Naive thymus-derived CD4-positive, alpha-beta T cell (primary cell): ENCODE measurements at regions of chrX and their contacts with region 1.

Region 1: GRCh38 chrX:11758400-11759171 is 549 bp downstream of the MSL3 start:
- DNase-seq: peak; percentile 86 to 91 (median 89)
- ATAC-seq: peak; percentile 86
- H3K4me3 ChIP-seq: peak overlapping the region; percentile 95
- H3K4me3 Mint-ChIP-seq: peak overlapping the region; percentile 88 to 100 (median 97)
- H3K27ac ChIP-seq: peak overlapping the region; percentile 93
- H3K27ac Mint-ChIP-seq: peak overlapping the region; percentile 95 to 100 (median 99)
- H3K4me1 ChIP-seq: peaks cover 6 to 11% of the 10 kb centered on the region in 2 donors
- H3K4me1 Mint-ChIP-seq: peaks cover 1 to 48% (median 30%) of the 10 kb centered on the region in 7 donors
- H3K27me3 ChIP-seq: no peaks in the 10 kb centered on the region
- H3K27me3 Mint-ChIP-seq: peaks cover 0 to 24% (median 0%) of the 10 kb centered on the region in 5 donors

Region 2: GRCh38 chrX:10111364-10112148 is 1647.0 kb before region 1 on chrX:
- CTCF ChIA-PET with region 1: no interaction called
- POLR2A ChIA-PET with region 1: no interaction called
- intact Hi-C with region 1: loop called in 1 of 2 experiments (anchors 5 kb)
- DNase-seq: peak; percentile 12 to 81 (median 73)
- ATAC-seq: peak; percentile 84
- H3K4me3 ChIP-seq: peak overlapping the region; percentile 56
- H3K4me3 Mint-ChIP-seq: peak overlapping the region; percentile 65 to 90 (median 85)
- H3K27ac ChIP-seq: peak overlapping the region; percentile 81
- H3K27ac Mint-ChIP-seq: peak overlapping the region; percentile 96 to 100 (median 98)
- H3K4me1 ChIP-seq: peaks cover 61% of the 10 kb centered on the region in 2 donors
- H3K4me1 Mint-ChIP-seq: peaks cover 14 to 64% (median 62%) of the 10 kb centered on the region in 7 donors
- H3K27me3 ChIP-seq: no peaks in the 10 kb centered on the region
- H3K27me3 Mint-ChIP-seq: no peaks in the 10 kb centered on the region

Region 3: DNA sequence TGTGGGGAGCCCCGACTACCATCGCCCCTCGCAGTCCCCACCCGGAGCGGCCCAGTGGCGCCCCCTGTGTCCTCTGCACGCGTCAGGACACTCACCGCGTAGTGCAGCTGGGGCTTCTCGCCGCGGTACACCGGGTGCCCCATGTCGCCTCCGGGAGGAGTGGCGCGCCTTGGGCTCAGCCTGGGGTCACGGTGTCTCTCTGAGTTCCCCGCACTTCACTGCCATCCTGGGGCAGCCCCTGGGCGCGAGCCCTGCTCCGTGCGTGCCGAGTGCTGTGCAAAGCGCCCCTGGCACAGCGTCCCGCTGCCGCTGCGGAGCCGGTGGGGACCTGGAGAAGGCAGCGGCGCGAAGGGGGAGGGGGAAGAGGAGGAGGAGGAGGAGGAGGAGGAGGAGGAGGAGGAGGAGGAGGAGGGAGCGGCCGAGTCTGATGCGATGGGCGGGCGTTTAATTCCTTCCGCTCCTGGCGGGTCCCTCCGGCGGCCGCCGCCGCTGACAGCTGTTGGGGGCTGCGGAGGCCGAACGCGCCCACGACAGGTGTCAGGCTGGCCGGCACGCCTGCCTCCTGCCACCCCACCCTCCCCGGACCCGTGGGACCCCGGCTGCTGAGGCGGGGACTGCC is 331.0 kb before region 1 on chrX:
- CTCF ChIA-PET with region 1: no interaction called
- POLR2A ChIA-PET with region 1: no interaction called
- intact Hi-C with region 1: no loop called
- DNase-seq: peak in 1 of 9 donors; percentile 1
- ATAC-seq: peak; percentile 59
- H3K4me3 ChIP-seq: no peak overlapping the region
- H3K4me3 Mint-ChIP-seq: no peak overlapping the region
- H3K27ac ChIP-seq: no peak overlapping the region
- H3K27ac Mint-ChIP-seq: no peak overlapping the region
- H3K4me1 ChIP-seq: no peaks in the 10 kb centered on the region
- H3K4me1 Mint-ChIP-seq: peaks cover 0 to 4% (median 0%) of the 10 kb centered on the region in 7 donors
- H3K27me3 ChIP-seq: no peaks in the 10 kb centered on the region
- H3K27me3 Mint-ChIP-seq: peaks cover 14 to 28% (median 19%) of the 10 kb centered on the region in 5 donors

Region 4: DNA sequence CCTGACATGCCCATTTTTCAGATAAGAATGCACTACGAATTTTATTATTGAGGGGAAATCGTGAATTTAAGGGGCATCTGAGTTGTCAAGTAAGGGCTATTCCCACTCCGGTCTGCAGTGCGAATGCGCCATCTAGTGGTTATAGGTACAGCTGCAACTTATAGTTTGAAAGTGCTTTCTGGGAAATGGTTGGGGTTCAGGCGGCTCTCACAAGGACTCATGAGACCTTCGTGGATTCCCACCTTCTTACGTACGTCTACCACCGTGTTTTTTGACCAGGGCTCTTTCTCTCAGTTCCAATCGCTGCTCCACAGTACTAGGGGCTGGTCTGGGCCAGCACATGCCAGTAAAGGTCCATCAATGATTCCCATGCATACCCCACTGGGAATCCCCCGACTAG is 11.7 kb after region 1 on chrX:
- CTCF ChIA-PET with region 1: interaction called, 22 read pairs
- POLR2A ChIA-PET with region 1: interaction called, 40 read pairs
- intact Hi-C with region 1: loop called (anchors 1 kb)
- DNase-seq: peak in 7 of 9 donors; percentile 56 to 75 (median 69)
- ATAC-seq: peak; percentile 84
- H3K4me3 ChIP-seq: no peak overlapping the region
- H3K4me3 Mint-ChIP-seq: peak overlapping the region in 2 of 10 donors; percentile 14 to 25
- H3K27ac ChIP-seq: peak overlapping the region; percentile 62
- H3K27ac Mint-ChIP-seq: peak overlapping the region; percentile 69 to 96 (median 86)
- H3K4me1 ChIP-seq: peaks cover 8 to 20% of the 10 kb centered on the region in 2 donors
- H3K4me1 Mint-ChIP-seq: peaks cover 7 to 53% (median 39%) of the 10 kb centered on the region in 7 donors
- H3K27me3 ChIP-seq: no peaks in the 10 kb centered on the region
- H3K27me3 Mint-ChIP-seq: no peaks in the 10 kb centered on the region

Region 5: GRCh38 chrX:11792461-11793421 is 34.2 kb after region 1 on chrX:
- CTCF ChIA-PET with region 1: no interaction called
- POLR2A ChIA-PET with region 1: no interaction called
- intact Hi-C with region 1: loop called (anchors 1 to 2 kb)
- DNase-seq: peak in 8 of 9 donors; percentile 31 to 78 (median 54)
- ATAC-seq: peak; percentile 79
- H3K4me3 ChIP-seq: no peak overlapping the region
- H3K4me3 Mint-ChIP-seq: peak overlapping the region; percentile 35 to 74 (median 58)
- H3K27ac ChIP-seq: peak overlapping the region; percentile 56
- H3K27ac Mint-ChIP-seq: peak overlapping the region; percentile 71 to 92 (median 78)
- H3K4me1 ChIP-seq: peaks cover 9 to 13% of the 10 kb centered on the region in 2 donors
- H3K4me1 Mint-ChIP-seq: peaks cover 11 to 53% (median 42%) of the 10 kb centered on the region in 7 donors
- H3K27me3 ChIP-seq: no peaks in the 10 kb centered on the region
- H3K27me3 Mint-ChIP-seq: no peaks in the 10 kb centered on the region

Region 6: DNA sequence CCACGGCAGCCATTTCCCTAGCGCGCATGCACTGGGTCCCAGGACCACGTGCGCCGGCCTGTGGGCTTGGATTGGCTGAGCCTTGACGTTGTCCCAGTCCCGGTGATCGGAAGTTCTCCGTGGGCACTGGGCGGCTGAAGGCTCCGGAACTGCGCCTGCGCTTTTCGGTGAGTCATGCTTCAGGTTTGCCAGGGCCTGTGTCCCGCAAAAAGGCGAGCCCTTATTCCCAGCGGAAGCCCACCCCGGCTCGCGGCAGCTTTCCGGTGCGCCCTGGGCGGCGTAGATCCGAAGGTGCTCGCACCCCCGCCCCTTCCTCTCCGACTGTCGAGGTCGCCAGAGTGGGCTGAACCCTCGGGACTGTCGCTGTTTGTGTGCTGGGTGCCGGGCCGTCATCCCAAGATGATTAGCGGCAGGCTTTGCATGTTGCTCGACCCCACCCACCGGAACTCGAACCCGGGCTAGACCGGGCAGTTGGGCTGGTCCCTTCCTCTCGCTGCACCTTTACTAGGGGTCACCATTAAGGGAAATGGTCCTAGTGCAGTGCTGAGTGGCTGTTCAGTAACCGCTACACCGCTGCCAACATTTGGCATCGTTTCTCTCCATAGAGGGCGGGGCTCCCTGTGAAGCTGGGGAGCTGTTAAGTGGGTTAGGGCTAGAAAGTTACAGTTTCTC is 1894.6 kb after region 1 on chrX and contains the start of gene TCEANC:
- CTCF ChIA-PET with region 1: no interaction called
- POLR2A ChIA-PET with region 1: no interaction called
- intact Hi-C with region 1: loop called (anchors 2 to 10 kb)
- DNase-seq: peak; percentile 77 to 96 (median 93)
- ATAC-seq: peak; percentile 97
- H3K4me3 ChIP-seq: peak within 1 kb of the TSS; percentile 93
- H3K4me3 Mint-ChIP-seq: peak within 1 kb of the TSS; percentile 79 to 96 (median 93)
- H3K27ac ChIP-seq: peak within 1 kb of the TSS; percentile 93
- H3K27ac Mint-ChIP-seq: peak within 1 kb of the TSS; percentile 91 to 98 (median 96)
- H3K4me1 ChIP-seq: peaks cover 15 to 16% of the 10 kb centered on the region in 2 donors
- H3K4me1 Mint-ChIP-seq: peaks cover 0 to 39% (median 24%) of the 10 kb centered on the region in 7 donors
- H3K27me3 ChIP-seq: no peaks in the 10 kb centered on the region
- H3K27me3 Mint-ChIP-seq: no peaks in the 10 kb centered on the region
- total RNA-seq, gene TCEANC: 5.0 to 17.5 (median 11.4) TPM